ENCODE measurements at regions of chr22 and their contacts with region 1.

Region 1: DNA sequence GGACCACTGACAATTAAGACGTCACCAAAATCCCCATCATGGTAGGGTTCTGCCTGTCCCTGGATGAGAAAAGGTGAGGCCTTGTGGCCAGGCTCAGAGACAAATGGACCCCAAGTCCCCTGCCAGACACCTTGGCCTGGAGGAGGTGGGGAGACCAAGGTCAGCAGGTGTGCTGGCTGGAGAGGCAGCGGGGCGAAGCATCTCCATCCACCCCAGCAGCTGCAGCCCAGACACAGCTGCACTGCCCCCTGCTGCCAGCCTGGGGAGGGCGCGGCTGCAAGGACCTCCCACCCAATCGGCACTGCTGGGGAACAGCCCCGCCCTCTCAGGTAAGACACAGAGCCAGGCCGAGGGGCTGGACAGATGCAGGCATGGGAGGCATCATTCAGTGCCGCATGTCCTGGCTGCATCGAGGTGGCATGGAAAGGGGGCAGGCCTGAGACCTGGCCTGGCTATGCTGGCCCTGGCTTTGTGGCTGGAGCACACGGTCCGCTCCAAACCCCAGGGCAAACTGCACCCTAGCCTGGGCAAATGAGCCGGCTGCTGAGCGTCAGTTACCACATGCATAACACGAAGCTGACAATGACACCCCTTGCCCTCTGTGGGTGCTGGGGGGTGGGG is 12.2 kb upstream of the MFNG start:
- DNase-seq: peak; percentile 90
- H3K4me3 ChIP-seq: no peak overlapping the region
- H3K27ac ChIP-seq: no peak overlapping the region; a peak in 1 of 4 replicates
- H3K4me1 ChIP-seq: peaks cover 16 to 53% of the 10 kb centered on the region in 2 experiments
- H3K27me3 ChIP-seq: no peaks in the 10 kb centered on the region
- CTCF ChIP-seq: peak; percentile 40
- EP300 ChIP-seq: no peak
- RAD21 ChIP-seq: peak; percentile 54

Region 2: DNA sequence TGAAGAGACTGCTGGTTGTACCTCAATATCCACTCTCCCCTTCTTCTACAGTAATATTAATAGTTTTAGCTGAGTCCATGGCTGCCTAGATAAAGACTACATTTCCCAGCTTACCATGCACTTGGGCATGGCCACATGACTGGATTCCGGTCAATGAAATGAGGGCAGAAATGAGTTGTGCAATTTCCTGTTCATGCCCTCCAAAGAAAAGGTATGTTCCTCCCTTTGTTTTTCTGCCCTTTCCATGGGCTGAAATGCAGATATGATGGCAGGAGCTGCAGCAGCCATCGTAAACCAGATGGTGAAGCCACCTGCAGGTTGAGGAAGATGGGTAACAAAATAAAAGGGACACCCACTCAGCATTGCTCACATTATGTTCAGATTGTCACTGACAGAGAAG is 55.9 kb before region 1 on chr22:
- CTCF ChIA-PET with region 1: no interaction called
- POLR2A ChIA-PET with region 1: no interaction called
- DNase-seq: no peak
- H3K4me3 ChIP-seq: no peak overlapping the region
- H3K27ac ChIP-seq: no peak overlapping the region
- H3K4me1 ChIP-seq: no peaks in the 10 kb centered on the region
- H3K27me3 ChIP-seq: no peaks in the 10 kb centered on the region
- CTCF ChIP-seq: no peak
- EP300 ChIP-seq: no peak
- RAD21 ChIP-seq: no peak

Region 3: GRCh38 chr22:37486224-37486845 is 12.1 kb before region 1 on chr22 and contains the start of gene MFNG:
- CTCF ChIA-PET with region 1: interaction called, 14 read pairs
- POLR2A ChIA-PET with region 1: no interaction called
- DNase-seq: peak; percentile 91
- H3K4me3 ChIP-seq: no peak within 1 kb of the TSS
- H3K27ac ChIP-seq: no peak within 1 kb of the TSS
- H3K4me1 ChIP-seq: peaks cover 0 to 13% of the 10 kb centered on the region in 2 experiments; a peak in 1 of 4 replicates
- H3K27me3 ChIP-seq: no peaks in the 10 kb centered on the region
- CTCF ChIP-seq: no peak
- EP300 ChIP-seq: no peak
- RAD21 ChIP-seq: no peak
- polyA plus RNA-seq, gene MFNG: 0.18 and 0.34 TPM in 2 replicates

Region 4: GRCh38 chr22:37508431-37508992 is 10.1 kb after region 1 on chr22:
- CTCF ChIA-PET with region 1: interaction called, 19 read pairs
- POLR2A ChIA-PET with region 1: no interaction called
- DNase-seq: no peak
- H3K4me3 ChIP-seq: no peak overlapping the region
- H3K27ac ChIP-seq: peak overlapping the region in 1 of 2 experiments; percentile 62; a peak in 1 of 4 replicates
- H3K4me1 ChIP-seq: peaks cover 0 to 20% of the 10 kb centered on the region in 2 experiments; a peak in 1 of 4 replicates
- H3K27me3 ChIP-seq: no peaks in the 10 kb centered on the region
- CTCF ChIP-seq: no peak
- EP300 ChIP-seq: no peak
- RAD21 ChIP-seq: no peak

Region 5: DNA sequence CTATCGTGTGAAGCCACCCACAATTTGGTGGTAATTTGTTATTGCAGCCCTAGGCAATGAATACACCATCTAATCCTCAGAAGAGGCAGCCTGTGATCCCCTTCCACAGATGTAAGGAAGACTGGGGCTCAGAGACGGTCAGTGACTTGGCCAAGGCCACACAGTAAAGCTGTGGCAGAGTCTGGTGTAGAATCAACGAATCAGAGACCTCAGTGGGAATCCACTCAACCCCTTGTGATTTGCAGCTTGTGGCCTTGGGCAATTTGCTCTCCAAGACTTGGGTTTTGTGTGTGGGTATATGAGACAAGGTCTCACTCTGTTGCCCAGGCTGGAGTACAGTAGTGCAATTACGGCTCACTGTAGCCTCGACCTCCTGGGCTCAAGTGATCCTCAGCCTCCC is 79.6 kb after region 1 on chr22:
- CTCF ChIA-PET with region 1: no interaction called
- POLR2A ChIA-PET with region 1: no interaction called
- DNase-seq: no peak
- H3K4me3 ChIP-seq: no peak overlapping the region
- H3K27ac ChIP-seq: no peak overlapping the region
- H3K4me1 ChIP-seq: no peaks in the 10 kb centered on the region; a peak in 2 of 4 replicates
- H3K27me3 ChIP-seq: no peaks in the 10 kb centered on the region
- CTCF ChIP-seq: no peak
- EP300 ChIP-seq: no peak
- RAD21 ChIP-seq: no peak

Region 6: GRCh38 chr22:37633625-37634416 is 135.4 kb after region 1 on chr22:
- CTCF ChIA-PET with region 1: no interaction called
- POLR2A ChIA-PET with region 1: no interaction called
- DNase-seq: peak; percentile 91
- H3K4me3 ChIP-seq: peak overlapping the region; percentile 2 to 7; a peak in 2 of 4 replicates
- H3K27ac ChIP-seq: peak overlapping the region; percentile 69 to 98
- H3K4me1 ChIP-seq: peaks cover 23 to 51% of the 10 kb centered on the region in 2 experiments
- H3K27me3 ChIP-seq: no peaks in the 10 kb centered on the region
- CTCF ChIP-seq: peak; percentile 41
- EP300 ChIP-seq: peak in 1 of 2 experiments; percentile 25; a peak in 1 of 4 replicates
- RAD21 ChIP-seq: no peak; the same call in 1 of the 2 replicates